B cell (primary cell): ENCODE measurements at regions of chr5 and their contacts with region 1.

Region 1: DNA sequence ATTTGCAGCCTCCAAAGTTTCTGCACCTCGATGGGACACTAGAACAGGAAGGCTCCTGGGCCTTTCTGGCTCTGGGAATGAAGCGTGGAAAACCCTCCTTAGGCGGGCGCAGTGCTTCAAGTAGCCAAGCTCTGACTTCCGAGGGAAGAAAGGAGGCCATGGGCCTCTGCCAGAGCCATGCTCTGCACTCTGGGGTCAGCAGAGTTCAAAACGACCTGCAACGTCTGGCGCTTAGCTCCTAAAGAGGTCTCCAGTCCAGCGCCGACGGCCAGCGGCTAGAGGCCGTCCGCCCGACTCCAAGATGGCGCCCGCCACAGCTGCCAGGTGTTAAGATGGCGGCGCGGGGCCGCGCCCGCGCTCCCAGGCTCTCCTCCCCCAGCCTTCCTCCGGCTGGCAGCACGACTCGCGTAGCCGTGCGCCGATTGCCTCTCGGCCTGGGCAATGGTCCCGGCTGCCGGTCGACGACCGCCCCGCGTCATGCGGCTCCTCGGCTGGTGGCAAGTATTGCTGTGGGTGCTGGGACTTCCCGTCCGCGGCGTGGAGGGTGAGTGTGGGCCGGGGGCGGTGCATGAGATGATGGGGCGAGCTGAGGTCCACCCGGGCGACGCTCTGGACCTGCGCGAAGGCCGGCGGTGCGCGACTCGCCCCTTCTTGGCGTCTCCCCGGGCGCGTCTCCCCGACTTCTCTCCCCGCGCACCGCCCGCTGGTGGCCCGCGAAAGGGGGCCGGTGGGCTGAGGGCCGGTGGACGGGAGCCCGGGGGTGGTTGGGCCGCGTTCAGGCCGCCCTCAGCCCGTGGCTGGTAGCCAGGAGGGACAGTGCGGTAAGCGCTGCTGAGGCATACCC is at the start of gene TXNDC15:
- DNase-seq: peak; percentile 89
- ATAC-seq: peak; percentile 92
- H3K4me3 ChIP-seq: peak within 1 kb of the TSS; percentile 78 to 94 (median 88)
- H3K4me3 Mint-ChIP-seq: peak within 1 kb of the TSS; percentile 96
- H3K27ac ChIP-seq: peak within 1 kb of the TSS; percentile 91 to 95
- H3K27ac Mint-ChIP-seq: peak within 1 kb of the TSS; percentile 94
- H3K4me1 ChIP-seq: peaks cover 22 to 39% of the 10 kb centered on the region in 2 donors
- H3K4me1 Mint-ChIP-seq: peaks cover 37% of the 10 kb centered on the region
- H3K27me3 ChIP-seq: no peaks in the 10 kb centered on the region
- H3K27me3 Mint-ChIP-seq: no peaks in the 10 kb centered on the region
- CTCF ChIP-seq: no peak
- total RNA-seq, gene TXNDC15: 45.2 and 50.4 TPM in 2 replicates

Region 2: GRCh38 chr5:134813407-134813806 is 60.8 kb before region 1 on chr5:
- CTCF ChIA-PET with region 1: no interaction called
- POLR2A ChIA-PET with region 1: no interaction called
- intact Hi-C with region 1: no loop called
- DNase-seq: peak; percentile 37
- ATAC-seq: peak; percentile 67
- H3K4me3 ChIP-seq: peak overlapping the region in 1 of 5 experiments; percentile 1
- H3K4me3 Mint-ChIP-seq: peak overlapping the region; percentile 54
- H3K27ac ChIP-seq: peak overlapping the region; percentile 32 to 74
- H3K27ac Mint-ChIP-seq: peak overlapping the region; percentile 53
- H3K4me1 ChIP-seq: peaks cover 10 to 16% of the 10 kb centered on the region in 2 donors
- H3K4me1 Mint-ChIP-seq: peaks cover 14% of the 10 kb centered on the region
- H3K27me3 ChIP-seq: no peaks in the 10 kb centered on the region
- H3K27me3 Mint-ChIP-seq: no peaks in the 10 kb centered on the region
- CTCF ChIP-seq: no peak

Region 3: GRCh38 chr5:134845852-134846640 is 28.2 kb before region 1 on chr5 and contains the start of gene C5orf24:
- CTCF ChIA-PET with region 1: interaction called, 8 read pairs
- POLR2A ChIA-PET with region 1: interaction called, 11 read pairs
- intact Hi-C with region 1: loop called (anchors 1 kb)
- DNase-seq: peak; percentile 97
- ATAC-seq: peak; percentile 91
- H3K4me3 ChIP-seq: peak within 1 kb of the TSS; percentile 84 to 93 (median 87)
- H3K4me3 Mint-ChIP-seq: peak within 1 kb of the TSS; percentile 95
- H3K27ac ChIP-seq: peak within 1 kb of the TSS; percentile 86 to 93
- H3K27ac Mint-ChIP-seq: peak within 1 kb of the TSS; percentile 95
- H3K4me1 ChIP-seq: peaks cover 17 to 21% of the 10 kb centered on the region in 2 donors
- H3K4me1 Mint-ChIP-seq: peaks cover 25% of the 10 kb centered on the region
- H3K27me3 ChIP-seq: no peaks in the 10 kb centered on the region
- H3K27me3 Mint-ChIP-seq: no peaks in the 10 kb centered on the region
- CTCF ChIP-seq: no peak
- total RNA-seq, gene C5orf24: 38.2 and 44.2 TPM in 2 replicates